ENCODE measurements at regions of chr2 and their contacts with region 1.

Region 1: GRCh38 chr2:24123195-24123921 is at the starts of genes FAM228B and PFN4:
- DNase-seq: peak; percentile 96
- total RNA-seq, gene FAM228B: 30.5 TPM
- total RNA-seq, gene PFN4: 1.0 TPM

Region 2: GRCh38 chr2:23939987-23940717 is 183.2 kb before region 1 on chr2 and contains the start of gene UBXN2A:
- intact Hi-C with region 1: loop called (anchors 5 kb)
- DNase-seq: peak; percentile 87
- total RNA-seq, gene UBXN2A: 22.4 TPM

Region 3: GRCh38 chr2:24075915-24076848 is 47.2 kb before region 1 on chr2 and contains the start of gene SF3B6:
- intact Hi-C with region 1: loop called (anchors 2 kb)
- DNase-seq: peak; percentile 100
- total RNA-seq, gene SF3B6: 53.1 TPM

Region 4: GRCh38 chr2:24084386-24085361 is 38.7 kb before region 1 on chr2 and contains the start of gene TP53I3:
- intact Hi-C with region 1: loop called (anchors 2 kb)
- DNase-seq: peak; percentile 94
- total RNA-seq, gene TP53I3: 8.3 TPM

Region 5: DNA sequence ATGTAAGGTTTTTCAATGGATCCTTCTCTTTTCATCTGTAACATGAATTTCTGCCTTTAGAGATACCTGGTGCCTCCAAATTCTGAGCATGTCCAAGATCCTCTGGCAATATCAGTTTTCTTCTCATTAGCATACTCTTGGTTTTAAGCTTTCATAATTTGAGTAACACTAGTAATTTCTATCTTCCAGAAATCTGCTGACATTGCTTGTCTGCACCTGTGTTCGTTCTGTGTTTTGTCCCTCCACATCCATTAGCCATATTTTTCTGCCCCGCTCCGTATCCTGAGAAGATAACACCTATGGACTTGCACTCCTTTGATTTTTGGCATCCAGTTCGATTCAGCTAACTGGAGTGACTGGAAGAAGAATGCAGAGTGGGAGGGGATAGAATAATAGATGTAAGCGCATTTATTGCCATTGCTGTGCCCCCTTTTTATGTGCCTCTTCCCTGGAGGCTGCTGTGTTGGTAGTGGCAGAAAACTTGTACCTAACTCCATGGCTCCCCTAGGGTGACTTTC is 269.2 kb after region 1 on chr2:
- intact Hi-C with region 1: no loop called
- DNase-seq: no peak

Measured in cardiac septum (tissue), 1 donor.